Natural killer cell (primary cell): ENCODE measurements at regions of chr12 and their contacts with region 1.

Region 1: GRCh38 chr12:46459861-46460545 is 87.4 kb upstream of the SLC38A2 start:
- DNase-seq: peak in 1 of 2 donors; percentile 37
- ATAC-seq: no peak
- H3K4me3 ChIP-seq: no peak overlapping the region
- H3K4me3 Mint-ChIP-seq: peak overlapping the region; percentile 76
- H3K27ac ChIP-seq: peak overlapping the region; percentile 10
- H3K27ac Mint-ChIP-seq: peak overlapping the region; percentile 87 to 89
- H3K4me1 ChIP-seq: peaks cover 35% of the 10 kb centered on the region
- H3K4me1 Mint-ChIP-seq: peaks cover 62 to 63% of the 10 kb centered on the region in 2 donors
- H3K27me3 ChIP-seq: no peaks in the 10 kb centered on the region
- H3K27me3 Mint-ChIP-seq: no peaks in the 10 kb centered on the region
- CTCF ChIP-seq: no peak

Region 2: GRCh38 chr12:46546634-46547286 is 86.8 kb after region 1 on chr12:
- intact Hi-C with region 1: loop called (anchors 5 kb)
- DNase-seq: peak in 1 of 2 donors; percentile 26
- ATAC-seq: peak; percentile 81 to 97 (median 90)
- H3K4me3 ChIP-seq: no peak overlapping the region
- H3K4me3 Mint-ChIP-seq: peak overlapping the region; percentile 80
- H3K27ac ChIP-seq: peak overlapping the region; percentile 62
- H3K27ac Mint-ChIP-seq: peak overlapping the region; percentile 84 to 92
- H3K4me1 ChIP-seq: peaks cover 28% of the 10 kb centered on the region
- H3K4me1 Mint-ChIP-seq: peaks cover 80 to 89% of the 10 kb centered on the region in 2 donors
- H3K27me3 ChIP-seq: no peaks in the 10 kb centered on the region
- H3K27me3 Mint-ChIP-seq: no peaks in the 10 kb centered on the region
- CTCF ChIP-seq: no peak